Activated CD8-positive, alpha-beta T cell treated with anti-CD3 and anti-CD28 coated beads for 36 hours (primary cell): ENCODE measurements at regions of chr10 and their contacts with region 1.

Region 1: GRCh38 chr10:24642622-24643417 is 80.9 kb downstream of the ARHGAP21 start:
- DNase-seq: no peak
- ATAC-seq: peak; percentile 86
- H3K4me3 Mint-ChIP-seq: no peak overlapping the region
- H3K27ac Mint-ChIP-seq: no peak overlapping the region
- H3K4me1 Mint-ChIP-seq: peaks cover 3% of the 10 kb centered on the region
- H3K27me3 Mint-ChIP-seq: no peaks in the 10 kb centered on the region
- CTCF ChIP-seq: peak; percentile 71

Region 2: GRCh38 chr10:24617771-24618391 is 24.9 kb before region 1 on chr10:
- CTCF ChIA-PET with region 1: interaction called, 10 read pairs
- POLR2A ChIA-PET with region 1: interaction called, 3 read pairs
- intact Hi-C with region 1: no loop called
- DNase-seq: peak; percentile 57
- ATAC-seq: no peak
- H3K4me3 Mint-ChIP-seq: no peak overlapping the region
- H3K27ac Mint-ChIP-seq: peak overlapping the region; percentile 66
- H3K4me1 Mint-ChIP-seq: peaks cover 25% of the 10 kb centered on the region
- H3K27me3 Mint-ChIP-seq: no peaks in the 10 kb centered on the region
- CTCF ChIP-seq: peak; percentile 96

Region 3: DNA sequence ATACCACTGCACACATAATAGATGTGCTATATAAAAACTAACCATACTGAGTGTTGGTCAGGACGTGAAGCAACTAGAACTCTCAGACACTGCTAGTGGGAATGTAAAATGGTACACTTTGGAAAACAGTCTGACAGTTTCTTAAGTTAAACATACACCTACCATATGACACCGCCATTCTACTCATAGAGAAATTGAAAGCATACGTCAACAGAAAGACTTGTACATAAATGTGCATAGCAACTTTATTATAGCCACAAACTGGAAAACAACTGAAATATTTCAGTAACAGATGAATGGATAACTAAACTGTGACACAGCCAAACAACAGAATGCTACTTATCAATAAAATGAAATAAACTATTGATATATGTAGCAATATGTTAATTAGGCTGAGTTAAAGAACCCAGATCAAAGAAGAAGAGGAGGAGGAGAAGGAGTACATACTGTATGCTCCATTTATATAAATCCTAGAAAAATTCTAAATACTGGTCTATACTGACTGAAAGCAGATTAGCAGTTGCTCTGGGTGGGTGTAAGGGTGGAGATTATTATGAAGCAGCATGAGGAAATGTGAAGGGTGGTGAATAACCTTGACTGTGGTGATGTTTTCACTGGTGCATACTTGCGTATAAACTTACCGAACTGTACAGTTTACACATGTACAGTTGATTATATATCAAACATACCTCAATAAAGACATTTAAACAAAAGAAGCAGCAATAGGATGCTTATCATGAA is 32.2 kb after region 1 on chr10:
- CTCF ChIA-PET with region 1: no interaction called
- POLR2A ChIA-PET with region 1: no interaction called
- intact Hi-C with region 1: no loop called
- DNase-seq: no peak
- ATAC-seq: no peak
- H3K4me3 Mint-ChIP-seq: no peak overlapping the region
- H3K27ac Mint-ChIP-seq: no peak overlapping the region
- H3K4me1 Mint-ChIP-seq: peaks cover 4% of the 10 kb centered on the region
- H3K27me3 Mint-ChIP-seq: no peaks in the 10 kb centered on the region
- CTCF ChIP-seq: no peak

Region 4: DNA sequence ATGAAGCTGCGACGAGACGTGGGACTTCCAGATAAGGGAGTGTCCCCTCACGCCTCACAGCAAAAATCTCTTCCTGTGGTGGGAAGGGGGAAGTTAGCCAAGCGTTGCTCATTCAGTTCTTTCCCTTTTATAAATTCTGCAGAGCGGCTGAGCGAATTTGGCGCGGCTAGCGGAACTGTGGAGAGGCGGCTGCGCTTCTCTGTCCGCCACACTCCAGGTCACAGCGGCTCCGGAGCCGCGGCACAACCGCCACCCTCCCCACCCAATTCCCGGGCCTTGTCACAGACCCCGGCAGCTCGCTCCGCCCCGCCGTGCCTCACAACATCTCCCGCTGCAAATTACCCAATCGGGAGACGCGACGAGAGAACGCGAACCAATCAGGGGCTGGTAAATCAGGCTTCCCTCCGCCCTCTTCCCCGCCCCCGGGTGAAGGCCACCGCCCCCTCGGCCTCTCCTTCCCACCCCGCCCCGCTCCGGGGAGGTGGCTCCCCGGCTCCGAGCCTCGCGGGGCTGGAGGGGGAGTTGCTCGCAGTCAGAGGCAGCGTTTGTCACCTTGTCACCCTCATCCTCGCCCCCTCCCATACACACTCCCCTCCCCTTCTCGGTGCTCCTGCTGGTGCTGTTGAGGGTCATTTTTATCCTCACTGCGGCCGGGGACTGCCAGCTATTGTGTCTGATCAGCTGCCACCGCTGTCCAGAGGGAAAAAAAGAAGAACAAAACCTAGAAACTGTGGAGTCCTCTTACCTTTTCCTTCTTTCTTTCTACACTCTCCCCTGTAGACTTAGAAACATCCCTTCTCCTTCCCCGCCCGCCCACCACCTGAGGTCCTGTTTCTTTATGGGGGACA is 81.8 kb after region 1 on chr10:
- CTCF ChIA-PET with region 1: no interaction called
- POLR2A ChIA-PET with region 1: no interaction called
- intact Hi-C with region 1: loop called (anchors 5 kb)
- DNase-seq: peak; percentile 97
- ATAC-seq: peak; percentile 91
- H3K4me3 Mint-ChIP-seq: peak overlapping the region; percentile 87
- H3K27ac Mint-ChIP-seq: peak overlapping the region; percentile 91
- H3K4me1 Mint-ChIP-seq: peaks cover 25% of the 10 kb centered on the region
- H3K27me3 Mint-ChIP-seq: no peaks in the 10 kb centered on the region
- CTCF ChIP-seq: no peak

Region 5: GRCh38 chr10:24989867-24990266 is 347.0 kb after region 1 on chr10:
- CTCF ChIA-PET with region 1: interaction called, 5 read pairs
- POLR2A ChIA-PET with region 1: no interaction called
- intact Hi-C with region 1: loop called (anchors 2 kb)
- DNase-seq: no peak
- ATAC-seq: no peak
- H3K4me3 Mint-ChIP-seq: no peak overlapping the region
- H3K27ac Mint-ChIP-seq: no peak overlapping the region
- H3K4me1 Mint-ChIP-seq: no peaks in the 10 kb centered on the region
- H3K27me3 Mint-ChIP-seq: no peaks in the 10 kb centered on the region
- CTCF ChIP-seq: peak; percentile 38

Region 6: GRCh38 chr10:25080880-25081581 is 438.2 kb after region 1 on chr10:
- CTCF ChIA-PET with region 1: interaction called, 20 read pairs
- POLR2A ChIA-PET with region 1: no interaction called
- intact Hi-C with region 1: loop called (anchors 1 kb)
- DNase-seq: peak; percentile 76
- ATAC-seq: peak; percentile 70
- H3K4me3 Mint-ChIP-seq: no peak overlapping the region
- H3K27ac Mint-ChIP-seq: no peak overlapping the region
- H3K4me1 Mint-ChIP-seq: peaks cover 5% of the 10 kb centered on the region
- H3K27me3 Mint-ChIP-seq: peaks cover 6% of the 10 kb centered on the region
- CTCF ChIP-seq: peak; percentile 88